Left ventricle myocardium inferior (tissue), 1 donor: ENCODE measurements at regions of chr1 and their contacts with region 1.

Region 1: GRCh38 chr1:59678493-59679228 is 136.1 kb upstream of the HOOK1 start:
- DNase-seq: no peak
- H3K4me3 ChIP-seq: no peak overlapping the region
- H3K27ac ChIP-seq: peak overlapping the region; percentile 70
- H3K4me1 ChIP-seq: peaks cover 43% of the 10 kb centered on the region
- H3K27me3 ChIP-seq: no peaks in the 10 kb centered on the region
- CTCF ChIP-seq: no peak

Region 2: DNA sequence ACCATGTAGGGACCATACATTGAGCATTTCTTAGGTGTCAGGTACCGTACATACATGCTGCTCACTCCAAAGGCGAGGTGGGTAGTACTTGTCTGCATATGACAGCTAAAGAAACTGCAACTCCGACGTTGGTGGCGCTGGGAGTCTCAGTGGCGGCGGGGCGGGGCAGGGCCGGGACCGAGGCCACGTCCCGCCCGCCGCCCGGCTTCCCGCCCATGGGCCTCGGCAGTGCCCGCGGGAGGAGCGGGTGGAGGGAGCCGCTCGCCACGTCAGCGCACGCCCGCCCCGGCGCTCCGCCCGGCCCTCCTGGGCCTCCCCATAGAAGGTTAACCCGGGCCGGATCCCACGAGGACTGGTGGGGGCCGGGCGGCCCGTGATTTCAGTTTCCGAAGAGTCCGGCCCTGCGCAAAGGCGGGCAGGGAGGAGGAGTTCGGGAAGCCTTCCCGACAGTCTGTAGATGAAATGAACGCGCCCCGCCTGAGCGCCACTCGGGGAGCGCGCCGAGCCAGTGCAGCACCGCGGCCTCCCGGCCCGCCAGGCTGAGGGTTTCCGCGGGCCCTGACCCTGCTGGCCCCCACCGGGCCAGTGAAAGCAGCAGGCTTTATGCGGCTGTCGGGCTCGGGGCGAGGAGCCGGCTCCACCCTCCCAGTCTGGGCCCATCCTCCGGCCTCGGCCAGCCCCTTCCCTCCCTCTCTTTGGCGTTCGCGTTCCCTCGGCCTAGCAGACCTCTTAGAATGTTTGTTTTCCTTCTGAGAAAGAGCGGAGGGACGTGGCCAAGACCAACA is 775.0 kb before region 1 on chr1:
- intact Hi-C with region 1: loop called (anchors 10 kb)
- DNase-seq: peak; percentile 96
- H3K4me3 ChIP-seq: peak overlapping the region; percentile 69
- H3K27ac ChIP-seq: peak overlapping the region; percentile 97
- H3K4me1 ChIP-seq: peaks cover 35% of the 10 kb centered on the region
- H3K27me3 ChIP-seq: no peaks in the 10 kb centered on the region
- CTCF ChIP-seq: peak; percentile 22